T-cell (primary cell): ENCODE measurements at regions of chr5 and their contacts with region 1.

Region 1: GRCh38 chr5:62562867-62563266 is 15.8 kb upstream of the LRRC70 start:
- DNase-seq: no peak
- ATAC-seq: no peak
- H3K4me3 ChIP-seq: no peak overlapping the region
- H3K4me3 Mint-ChIP-seq: no peak overlapping the region
- H3K27ac ChIP-seq: no peak overlapping the region
- H3K27ac Mint-ChIP-seq: no peak overlapping the region
- H3K4me1 ChIP-seq: peaks cover 0 to 3% of the 10 kb centered on the region in 2 experiments
- H3K4me1 Mint-ChIP-seq: no peaks in the 10 kb centered on the region
- H3K27me3 ChIP-seq: no peaks in the 10 kb centered on the region
- H3K27me3 Mint-ChIP-seq: no peaks in the 10 kb centered on the region

Region 2: DNA sequence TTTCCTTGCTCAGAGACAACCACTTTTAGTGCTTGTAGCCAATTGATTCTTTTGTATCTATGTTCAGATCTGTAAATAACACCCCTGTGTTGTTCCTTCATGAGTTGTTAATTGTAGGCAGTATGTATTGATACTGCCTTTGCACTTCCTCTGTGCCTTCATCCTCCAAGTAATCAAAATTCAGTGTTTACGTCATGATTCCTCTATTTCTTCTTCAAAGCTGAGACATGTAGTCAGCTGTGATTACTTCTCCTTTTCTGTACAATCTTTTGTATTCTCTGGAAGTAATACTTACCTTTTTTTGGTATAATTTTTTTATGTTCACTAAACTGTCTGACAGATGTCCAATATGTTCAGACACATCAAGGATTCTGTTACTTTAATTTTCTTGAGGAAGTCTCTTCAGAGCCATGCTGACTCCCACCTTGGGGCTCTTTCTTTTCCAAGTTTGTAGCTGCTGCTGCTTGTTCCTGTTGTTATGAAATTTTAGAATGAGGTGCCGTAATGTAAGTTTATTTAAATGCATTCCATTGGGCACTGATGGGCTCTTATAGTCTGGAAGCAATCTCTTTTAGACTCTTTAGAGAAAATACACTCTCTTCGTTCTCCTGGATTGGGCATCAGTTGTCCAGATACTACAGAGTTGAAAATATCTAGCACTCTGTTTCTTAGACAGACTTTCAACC is 14.8 kb before region 1 on chr5:
- CTCF ChIA-PET with region 1: no interaction called
- POLR2A ChIA-PET with region 1: no interaction called
- DNase-seq: no peak
- ATAC-seq: no peak
- H3K4me3 ChIP-seq: no peak overlapping the region
- H3K4me3 Mint-ChIP-seq: no peak overlapping the region
- H3K27ac ChIP-seq: no peak overlapping the region
- H3K27ac Mint-ChIP-seq: peak overlapping the region in 1 of 2 donors; percentile 12
- H3K4me1 ChIP-seq: no peaks in the 10 kb centered on the region
- H3K4me1 Mint-ChIP-seq: peaks cover 0 to 3% (median 0%) of the 10 kb centered on the region in 3 donors
- H3K27me3 ChIP-seq: no peaks in the 10 kb centered on the region
- H3K27me3 Mint-ChIP-seq: no peaks in the 10 kb centered on the region

Region 3: GRCh38 chr5:62578540-62578939 is 15.7 kb after region 1 on chr5 and contains the start of gene LRRC70:
- CTCF ChIA-PET with region 1: no interaction called
- POLR2A ChIA-PET with region 1: interaction called in 1 of 2 experiments, 10 read pairs
- DNase-seq: peak in 11 of 35 experiments; percentile 3 to 86 (median 15)
- ATAC-seq: peak; percentile 69 to 99 (median 90)
- H3K4me3 ChIP-seq: no peak within 1 kb of the TSS
- H3K4me3 Mint-ChIP-seq: peak within 1 kb of the TSS; percentile 67 to 79 (median 72)
- H3K27ac ChIP-seq: peak within 1 kb of the TSS; percentile 35
- H3K27ac Mint-ChIP-seq: peak within 1 kb of the TSS; percentile 73 to 87
- H3K4me1 ChIP-seq: peaks cover 0 to 36% of the 10 kb centered on the region in 2 experiments
- H3K4me1 Mint-ChIP-seq: peaks cover 34 to 53% (median 45%) of the 10 kb centered on the region in 3 donors
- H3K27me3 ChIP-seq: no peaks in the 10 kb centered on the region
- H3K27me3 Mint-ChIP-seq: no peaks in the 10 kb centered on the region
- total RNA-seq, gene LRRC70: 0.43 to 4.5 (median 1.8) TPM